Activated T-helper 1 cell treated with anti-CD3 and anti-CD28 coated beads, Interleukin-12 subunit alpha, Interleukin-12 subunit beta, Interleukin-2, Interleukin-4 antibody, amounts not matched to agents 30 ng/mL and 10 ng/mL and 1 ng/mL, durations not matched to agents 14 hours and 24 hours and 36 hours (primary cell): ENCODE measurements at regions of chr15 and their contacts with region 1.

Region 1: GRCh38 chr15:64774629-64775493 is 528 bp downstream of the RBPMS2 start:
- DNase-seq: no peak
- H3K4me3 Mint-ChIP-seq: peak overlapping the region; percentile 55
- H3K27ac Mint-ChIP-seq: no peak overlapping the region
- H3K4me1 Mint-ChIP-seq: no peaks in the 10 kb centered on the region
- H3K27me3 Mint-ChIP-seq: peaks cover 64% of the 10 kb centered on the region

Region 2: GRCh38 chr15:64809649-64810496 is 35.0 kb after region 1 on chr15:
- intact Hi-C with region 1: loop called (anchors 5 kb)
- DNase-seq: peak; percentile 51
- H3K4me3 Mint-ChIP-seq: no peak overlapping the region
- H3K27ac Mint-ChIP-seq: no peak overlapping the region
- H3K4me1 Mint-ChIP-seq: peaks cover 6% of the 10 kb centered on the region
- H3K27me3 Mint-ChIP-seq: peaks cover 7% of the 10 kb centered on the region